CD14-positive monocyte (primary cell): ENCODE measurements at regions of chr4 and their contacts with region 1.

Region 1: DNA sequence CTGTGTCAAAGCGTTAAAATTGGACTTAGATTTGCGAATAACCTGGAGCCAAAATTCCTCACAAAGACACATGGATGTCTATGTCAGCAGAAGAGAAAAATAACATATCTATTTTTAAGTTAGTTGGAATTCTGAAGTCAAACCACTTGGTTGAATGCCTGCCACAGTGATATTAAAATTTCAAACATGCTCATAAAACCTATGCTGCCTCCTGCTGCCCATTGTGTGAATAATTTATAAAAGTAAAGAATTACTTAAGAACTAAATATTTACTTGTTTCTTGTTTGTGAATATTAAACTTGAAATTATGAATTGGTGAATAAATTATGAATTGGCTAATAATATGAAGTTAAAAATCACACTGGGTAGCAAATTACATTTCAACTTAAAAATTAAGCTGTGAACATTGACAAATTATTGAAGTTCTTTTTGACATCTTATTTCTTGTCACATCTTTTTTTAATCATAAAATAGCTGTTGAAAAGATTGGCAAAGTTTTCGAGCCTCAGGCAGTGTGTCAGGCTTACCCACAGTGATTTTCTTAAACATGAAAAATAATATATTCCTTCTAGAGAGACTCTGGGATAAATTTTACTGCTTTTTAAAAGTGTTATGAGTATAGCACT is 35.4 kb downstream of the FABP2 start:
- DNase-seq: peak; percentile 35 to 55 (median 52)
- H3K4me3 ChIP-seq: no peak overlapping the region
- H3K4me3 Mint-ChIP-seq: no peak overlapping the region
- H3K27ac ChIP-seq: no peak overlapping the region
- H3K27ac Mint-ChIP-seq: no peak overlapping the region
- H3K4me1 ChIP-seq: no peaks in the 10 kb centered on the region
- H3K4me1 Mint-ChIP-seq: peaks cover 10% of the 10 kb centered on the region
- H3K27me3 ChIP-seq: no peaks in the 10 kb centered on the region
- H3K27me3 Mint-ChIP-seq: peaks cover 0 to 1% (median 0%) of the 10 kb centered on the region in 3 donors
- CTCF ChIP-seq: peak; percentile 90

Region 2: GRCh38 chr4:118981839-118982381 is 304.6 kb before region 1 on chr4:
- intact Hi-C with region 1: loop called (anchors 5 kb)
- DNase-seq: peak; percentile 54 to 83 (median 78)
- H3K4me3 ChIP-seq: no peak overlapping the region
- H3K4me3 Mint-ChIP-seq: no peak overlapping the region
- H3K27ac ChIP-seq: no peak overlapping the region
- H3K27ac Mint-ChIP-seq: peak overlapping the region in 2 of 7 donors; percentile 6 to 20
- H3K4me1 ChIP-seq: peaks cover 11 to 15% of the 10 kb centered on the region in 2 donors
- H3K4me1 Mint-ChIP-seq: peaks cover 16% of the 10 kb centered on the region
- H3K27me3 ChIP-seq: no peaks in the 10 kb centered on the region
- H3K27me3 Mint-ChIP-seq: peaks cover 0 to 3% (median 0%) of the 10 kb centered on the region in 3 donors
- CTCF ChIP-seq: peak; percentile 84

Region 3: GRCh38 chr4:119041951-119042560 is 244.4 kb before region 1 on chr4:
- intact Hi-C with region 1: loop called in 1 of 2 experiments (anchors 5 kb)
- DNase-seq: peak; percentile 54 to 75 (median 71)
- H3K4me3 ChIP-seq: no peak overlapping the region
- H3K4me3 Mint-ChIP-seq: no peak overlapping the region
- H3K27ac ChIP-seq: no peak overlapping the region
- H3K27ac Mint-ChIP-seq: no peak overlapping the region
- H3K4me1 ChIP-seq: peaks cover 15% of the 10 kb centered on the region in 2 donors
- H3K4me1 Mint-ChIP-seq: peaks cover 18% of the 10 kb centered on the region
- H3K27me3 ChIP-seq: no peaks in the 10 kb centered on the region
- H3K27me3 Mint-ChIP-seq: no peaks in the 10 kb centered on the region
- CTCF ChIP-seq: peak; percentile 72